Adrenal gland (tissue), 19 donors: ENCODE measurements at regions of chr17 and their contacts with region 1.

Region 1: GRCh38 chr17:79991140-79991923 is 44.3 kb downstream of the TBC1D16 start:
- DNase-seq: peak; percentile 83 to 92 (median 89)
- H3K4me3 ChIP-seq: peak overlapping the region in 1 of 4 donors; percentile 39
- H3K27ac ChIP-seq: no peak overlapping the region
- H3K4me1 ChIP-seq: peaks cover 35 to 48% of the 10 kb centered on the region in 2 donors
- H3K27me3 ChIP-seq: no peaks in the 10 kb centered on the region
- CTCF ChIP-seq: peak in 5 of 6 experiments; percentile 24 to 60 (median 50)
- POLR2A ChIP-seq: no peak

Region 2: DNA sequence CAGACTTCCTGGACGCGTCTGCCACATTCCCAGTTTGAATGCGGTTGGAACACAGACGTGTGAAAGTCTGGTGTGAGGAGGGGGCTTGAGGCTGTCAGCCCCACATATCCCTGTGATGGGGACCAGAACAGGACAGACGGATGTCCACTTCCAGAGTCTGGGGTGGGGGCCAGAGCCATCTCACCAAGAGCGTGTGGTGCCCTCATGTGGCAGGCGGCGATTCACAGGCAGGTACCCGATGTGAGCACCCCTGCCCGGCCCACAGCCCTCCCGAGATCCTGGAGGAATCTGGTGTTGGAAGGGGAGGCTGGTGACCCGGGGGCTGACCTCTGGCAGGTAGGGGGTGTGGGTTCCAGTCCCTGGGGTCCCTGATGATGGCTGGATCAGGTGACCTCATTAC is 865.2 kb before region 1 on chr17:
- intact Hi-C with region 1: no loop called
- DNase-seq: peak in 2 of 7 donors; percentile 10 to 13
- H3K4me3 ChIP-seq: no peak overlapping the region
- H3K27ac ChIP-seq: no peak overlapping the region
- H3K4me1 ChIP-seq: no peaks in the 10 kb centered on the region
- H3K27me3 ChIP-seq: peaks cover 4% of the 10 kb centered on the region
- CTCF ChIP-seq: peak in 1 of 6 experiments; percentile 11
- POLR2A ChIP-seq: no peak

Region 3: DNA sequence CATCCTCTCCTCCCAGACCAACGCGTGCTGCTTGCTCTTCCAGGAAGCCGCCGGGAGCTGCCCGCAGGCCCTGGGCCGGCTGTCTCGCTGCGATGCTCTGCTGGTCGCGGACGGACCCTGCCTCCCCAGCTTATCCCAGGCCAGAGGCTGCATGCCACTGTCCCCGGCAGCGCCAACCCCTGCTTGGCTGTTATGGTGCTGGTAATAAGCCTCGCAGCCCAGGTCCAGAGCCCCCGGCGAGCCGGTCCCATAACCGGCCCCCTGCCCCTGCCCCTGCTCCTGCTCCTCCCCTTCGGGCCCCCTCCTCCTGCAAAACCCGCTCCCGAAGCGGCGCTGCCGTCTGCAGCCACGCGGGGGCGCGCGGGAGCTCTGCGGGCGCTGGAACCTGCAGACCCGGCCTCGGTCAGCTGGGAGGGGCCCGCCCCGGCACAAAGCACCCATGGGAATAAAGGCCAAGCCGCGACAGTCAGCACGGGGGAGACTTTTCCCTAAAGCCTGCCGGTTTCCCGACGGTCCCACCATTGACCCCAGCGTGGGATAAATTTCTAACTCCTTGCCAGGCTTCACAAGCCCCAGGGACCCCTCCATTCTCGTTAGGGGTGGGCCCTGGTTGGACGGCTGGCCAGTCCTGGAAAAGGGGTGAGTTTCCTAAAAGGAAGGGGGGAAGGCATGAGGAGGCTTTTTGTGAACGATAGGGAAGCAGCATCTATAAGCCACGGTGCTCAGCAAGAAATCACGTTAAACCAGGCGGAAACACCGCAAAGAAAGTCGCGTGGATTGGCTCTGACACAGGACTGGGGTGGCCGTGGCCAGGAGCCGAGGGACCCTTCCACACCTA is 249.4 kb before region 1 on chr17:
- intact Hi-C with region 1: loop called in 1 of 2 experiments (anchors 5 kb)
- DNase-seq: peak in 6 of 7 donors; percentile 55 to 79 (median 71)
- H3K4me3 ChIP-seq: no peak overlapping the region
- H3K27ac ChIP-seq: no peak overlapping the region
- H3K4me1 ChIP-seq: peaks cover 6 to 7% of the 10 kb centered on the region in 2 donors
- H3K27me3 ChIP-seq: peaks cover 26% of the 10 kb centered on the region
- CTCF ChIP-seq: peak; percentile 60 to 95 (median 82)
- POLR2A ChIP-seq: no peak

Region 4: GRCh38 chr17:79789534-79790353 is 201.6 kb before region 1 on chr17:
- intact Hi-C with region 1: loop called in 1 of 2 experiments (anchors 5 kb)
- DNase-seq: peak in 2 of 7 donors; percentile 45 to 47
- H3K4me3 ChIP-seq: peak overlapping the region in 1 of 4 donors; percentile 35
- H3K27ac ChIP-seq: no peak overlapping the region
- H3K4me1 ChIP-seq: peaks cover 0 to 7% of the 10 kb centered on the region in 2 donors
- H3K27me3 ChIP-seq: peaks cover 76% of the 10 kb centered on the region
- CTCF ChIP-seq: peak; percentile 37 to 81 (median 62)
- POLR2A ChIP-seq: no peak

Region 5: DNA sequence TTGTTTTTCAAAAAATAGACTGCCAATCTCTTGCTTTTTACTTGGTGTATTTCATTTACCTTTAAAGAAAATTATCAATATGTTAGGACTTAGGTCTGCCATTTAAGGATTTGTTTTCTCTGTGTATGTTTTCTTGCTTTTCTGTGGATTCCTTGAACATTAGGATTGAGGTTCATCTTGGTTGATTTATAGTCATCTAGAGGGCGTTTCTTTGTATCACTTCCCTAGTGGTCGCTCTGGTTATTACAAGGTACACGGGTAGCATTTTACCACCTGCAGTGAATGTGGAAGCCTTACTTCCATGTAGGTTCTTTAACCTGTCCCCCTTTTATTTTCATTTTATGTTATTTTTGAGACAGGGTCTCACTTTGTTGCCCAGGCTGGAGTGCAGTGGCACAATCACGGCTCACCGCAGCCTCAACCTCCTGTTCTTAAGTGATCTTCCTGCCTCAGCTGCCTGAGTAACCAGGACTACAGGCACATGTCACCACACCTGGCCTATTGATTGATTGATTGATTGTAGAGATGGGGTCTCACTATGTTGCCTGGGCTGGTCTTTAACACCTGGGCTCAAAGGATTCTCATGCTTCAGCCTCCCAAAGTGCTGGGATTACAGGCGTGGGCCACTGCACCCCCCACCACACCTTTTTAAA is 116.9 kb before region 1 on chr17:
- intact Hi-C with region 1: no loop called
- DNase-seq: peak in 1 of 7 donors; percentile 16
- H3K4me3 ChIP-seq: no peak overlapping the region
- H3K27ac ChIP-seq: no peak overlapping the region
- H3K4me1 ChIP-seq: no peaks in the 10 kb centered on the region
- H3K27me3 ChIP-seq: peaks cover 6% of the 10 kb centered on the region
- CTCF ChIP-seq: peak; percentile 34 to 45 (median 42)
- POLR2A ChIP-seq: no peak